Dorsolateral prefrontal cortex (tissue), 120 donors: ENCODE measurements at regions of chr3 and their contacts with region 1.

Region 1: GRCh38 chr3:11803977-11804892 is 42.5 kb downstream of the TAMM41 start:
- DNase-seq: peak in 5 of 10 donors; percentile 24 to 43 (median 38)
- H3K4me3 ChIP-seq: no peak overlapping the region
- H3K27ac ChIP-seq: no peak overlapping the region
- H3K27me3 ChIP-seq: no peaks in the 10 kb centered on the region
- CTCF ChIP-seq: peak; percentile 47 to 85 (median 76)

Region 2: GRCh38 chr3:11379233-11379823 is 424.9 kb before region 1 on chr3:
- intact Hi-C with region 1: loop called (anchors 2 to 10 kb)
- DNase-seq: no peak
- H3K4me3 ChIP-seq: peak overlapping the region in 46 of 59 donors; percentile 1 to 57 (median 27)
- H3K27ac ChIP-seq: peak overlapping the region in 48 of 59 donors; percentile 7 to 79 (median 60)
- H3K27me3 ChIP-seq: no peaks in the 10 kb centered on the region
- CTCF ChIP-seq: peak; percentile 38 to 89 (median 78)